ENCODE measurements at regions of chr5 and their contacts with region 1.

Region 1: GRCh38 chr5:55364537-55365055 is 56.8 kb downstream of the MTREX start:
- DNase-seq: peak; percentile 28
- H3K4me3 Mint-ChIP-seq: no peak overlapping the region
- H3K27ac Mint-ChIP-seq: peak overlapping the region; percentile 25
- H3K4me1 Mint-ChIP-seq: peaks cover 19% of the 10 kb centered on the region
- H3K27me3 Mint-ChIP-seq: no peaks in the 10 kb centered on the region

Region 2: GRCh38 chr5:55072666-55073065 is 291.9 kb before region 1 on chr5:
- CTCF ChIA-PET with region 1: no interaction called
- intact Hi-C with region 1: loop called (anchors 1 kb)
- DNase-seq: no peak
- H3K4me3 Mint-ChIP-seq: no peak overlapping the region
- H3K27ac Mint-ChIP-seq: peak overlapping the region; percentile 34
- H3K4me1 Mint-ChIP-seq: peaks cover 33% of the 10 kb centered on the region
- H3K27me3 Mint-ChIP-seq: no peaks in the 10 kb centered on the region

Region 3: GRCh38 chr5:55407059-55407684 is 42.6 kb after region 1 on chr5:
- CTCF ChIA-PET with region 1: interaction called, 10 read pairs
- intact Hi-C with region 1: no loop called
- DNase-seq: peak; percentile 25
- H3K4me3 Mint-ChIP-seq: no peak overlapping the region
- H3K27ac Mint-ChIP-seq: no peak overlapping the region
- H3K4me1 Mint-ChIP-seq: peaks cover 4% of the 10 kb centered on the region
- H3K27me3 Mint-ChIP-seq: no peaks in the 10 kb centered on the region

Region 4: DNA sequence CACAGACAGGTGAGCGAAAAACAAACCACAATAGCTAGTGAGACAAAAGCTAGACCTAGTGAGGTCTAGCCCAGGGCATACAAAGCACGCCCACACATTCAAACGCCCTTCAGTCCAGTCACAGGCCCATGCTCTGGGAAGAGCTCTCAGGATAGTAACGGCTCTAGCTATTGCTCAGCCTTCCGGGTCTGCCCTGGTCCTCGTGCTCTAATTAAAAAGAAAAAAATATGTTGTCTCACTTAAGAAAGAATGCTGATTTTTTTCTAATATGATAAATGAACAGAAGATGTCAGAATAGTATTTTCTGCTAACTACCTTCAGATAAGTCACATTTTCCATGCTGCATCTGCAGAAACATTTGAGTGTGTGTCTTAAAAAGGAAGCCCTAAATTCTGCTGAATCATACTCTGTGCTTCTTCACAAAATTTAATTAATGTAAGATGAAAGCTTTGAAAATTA is 75.6 kb after region 1 on chr5:
- CTCF ChIA-PET with region 1: no interaction called
- intact Hi-C with region 1: loop called (anchors 2 kb)
- DNase-seq: peak; percentile 29
- H3K4me3 Mint-ChIP-seq: no peak overlapping the region
- H3K27ac Mint-ChIP-seq: no peak overlapping the region
- H3K4me1 Mint-ChIP-seq: peaks cover 44% of the 10 kb centered on the region
- H3K27me3 Mint-ChIP-seq: no peaks in the 10 kb centered on the region

Region 5: GRCh38 chr5:56026863-56027300 is 662.3 kb after region 1 on chr5:
- CTCF ChIA-PET with region 1: no interaction called
- intact Hi-C with region 1: loop called (anchors 10 kb)
- DNase-seq: peak; percentile 42
- H3K4me3 Mint-ChIP-seq: no peak overlapping the region
- H3K27ac Mint-ChIP-seq: no peak overlapping the region
- H3K4me1 Mint-ChIP-seq: peaks cover 30% of the 10 kb centered on the region
- H3K27me3 Mint-ChIP-seq: no peaks in the 10 kb centered on the region

Region 6: DNA sequence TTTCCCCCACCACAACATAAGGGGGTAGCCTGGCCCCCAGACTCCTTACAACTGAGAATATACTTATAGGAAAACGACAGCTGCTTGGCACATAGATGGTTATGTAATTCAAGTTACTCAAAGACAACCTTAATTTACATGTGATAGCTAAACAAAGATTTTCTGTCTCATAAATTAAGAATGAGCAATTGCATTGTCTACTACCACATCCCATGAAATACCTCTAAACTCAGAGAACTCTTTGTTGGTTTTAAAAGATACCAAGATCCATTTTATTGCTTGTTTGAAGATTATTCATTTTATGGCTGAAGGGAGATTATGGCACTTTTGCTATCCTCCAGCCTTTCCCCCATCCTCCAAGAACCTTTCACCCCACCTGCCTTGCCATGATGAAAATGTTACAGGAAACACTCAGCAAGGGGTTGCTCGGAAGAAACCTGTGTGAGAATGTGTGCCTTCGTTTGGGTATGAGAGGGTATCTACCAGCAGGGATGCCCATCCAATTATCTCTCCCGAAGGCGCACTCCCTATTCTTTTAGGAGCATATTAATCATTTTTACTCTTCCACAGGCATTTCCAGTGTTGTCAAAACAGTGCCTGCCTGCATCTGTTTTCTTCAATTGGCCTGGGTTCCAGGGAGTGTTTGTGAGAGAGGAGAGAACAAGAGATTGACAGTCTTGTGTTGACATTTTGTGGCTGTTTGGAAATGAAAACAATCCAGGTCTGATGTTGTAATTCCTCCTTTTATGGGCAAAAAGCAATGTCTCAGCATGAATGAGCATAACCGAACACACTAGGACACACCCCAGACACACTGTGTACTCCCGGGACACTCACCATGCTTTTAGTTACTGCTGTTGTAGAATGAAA is 1076.5 kb after region 1 on chr5:
- CTCF ChIA-PET with region 1: no interaction called
- intact Hi-C with region 1: no loop called
- DNase-seq: no peak
- H3K4me3 Mint-ChIP-seq: no peak overlapping the region
- H3K27ac Mint-ChIP-seq: no peak overlapping the region
- H3K4me1 Mint-ChIP-seq: peaks cover 6% of the 10 kb centered on the region
- H3K27me3 Mint-ChIP-seq: no peaks in the 10 kb centered on the region